HEK293 (cell line): ENCODE measurements at regions of chr20 and their contacts with region 1.

Region 1: DNA sequence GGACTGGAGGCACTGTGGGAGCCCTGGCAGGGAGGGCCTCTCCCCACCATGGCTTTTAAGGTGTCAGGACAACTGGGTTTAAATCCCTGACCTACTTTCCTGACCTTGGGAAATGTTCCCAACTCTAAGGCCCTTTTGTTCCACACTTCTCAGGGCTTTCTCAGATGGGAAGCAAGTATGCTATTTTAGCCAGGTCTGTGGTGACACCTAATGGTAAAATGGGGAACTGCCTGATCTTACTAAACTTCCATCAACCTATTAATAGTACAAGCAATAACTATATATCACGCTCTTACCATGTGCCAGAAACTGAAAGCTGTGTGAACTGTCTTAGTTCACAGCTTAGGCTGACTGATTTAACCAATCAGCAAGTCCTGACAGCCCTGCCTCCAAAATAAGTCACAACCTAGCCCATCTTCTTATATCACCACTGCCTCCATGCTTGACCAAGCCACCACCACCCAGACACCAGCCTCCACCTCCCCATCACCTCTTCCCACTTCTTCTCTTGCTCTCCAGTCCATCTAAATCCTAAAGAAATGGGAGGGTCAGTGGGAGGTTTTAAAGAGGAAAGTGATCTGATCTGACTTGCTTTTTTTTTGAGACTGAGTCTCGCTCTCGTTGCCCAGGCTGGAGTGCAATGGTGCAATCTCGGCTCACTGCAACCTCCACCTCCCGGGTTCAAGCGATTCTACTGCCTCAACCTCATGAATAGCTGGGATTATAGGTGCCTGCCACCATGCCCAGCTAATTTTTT is 6.9 kb upstream of the BLCAP start:
- H3K4me3 ChIP-seq: no peak overlapping the region
- H3K27ac ChIP-seq: no peak overlapping the region
- H3K4me1 ChIP-seq: no peaks in the 10 kb centered on the region
- CTCF ChIP-seq: peak; percentile 65; the same call in 1 of the 2 replicates

Region 2: GRCh38 chr20:36919715-36920333 is 614.8 kb before region 1 on chr20:
- CTCF ChIA-PET with region 1: no interaction called
- POLR2A ChIA-PET with region 1: no interaction called
- H3K4me3 ChIP-seq: no peak overlapping the region
- H3K27ac ChIP-seq: no peak overlapping the region
- H3K4me1 ChIP-seq: no peaks in the 10 kb centered on the region
- CTCF ChIP-seq: peak; percentile 59; the same call in 1 of the 2 replicates

Region 3: DNA sequence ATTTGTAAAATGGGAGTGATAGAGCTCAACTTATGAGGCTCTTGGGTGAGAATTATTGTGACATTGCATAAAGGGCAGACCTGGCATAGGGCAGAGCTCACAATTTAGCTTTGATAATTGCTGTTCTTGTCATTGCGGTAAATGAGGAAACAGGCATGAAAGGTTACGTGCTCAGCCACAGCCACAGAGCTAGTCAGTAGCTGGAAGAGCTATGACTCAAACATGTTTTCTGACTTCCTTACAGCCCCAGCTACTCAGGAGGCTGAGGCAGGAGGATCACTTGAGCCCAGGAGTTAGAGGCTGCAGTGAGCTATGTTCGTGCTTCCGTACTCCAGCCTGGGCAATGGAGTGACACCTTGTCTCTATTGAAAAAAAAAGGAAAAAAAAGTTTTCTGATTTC is 269.4 kb before region 1 on chr20:
- CTCF ChIA-PET with region 1: interaction called, 125 read pairs
- POLR2A ChIA-PET with region 1: no interaction called
- H3K4me3 ChIP-seq: no peak overlapping the region
- H3K27ac ChIP-seq: no peak overlapping the region
- H3K4me1 ChIP-seq: no peaks in the 10 kb centered on the region
- CTCF ChIP-seq: no peak

Region 4: GRCh38 chr20:37471741-37472235 is 62.8 kb before region 1 on chr20:
- CTCF ChIA-PET with region 1: no interaction called
- POLR2A ChIA-PET with region 1: no interaction called
- H3K4me3 ChIP-seq: no peak overlapping the region
- H3K27ac ChIP-seq: no peak overlapping the region
- H3K4me1 ChIP-seq: no peaks in the 10 kb centered on the region
- CTCF ChIP-seq: no peak

Region 5: DNA sequence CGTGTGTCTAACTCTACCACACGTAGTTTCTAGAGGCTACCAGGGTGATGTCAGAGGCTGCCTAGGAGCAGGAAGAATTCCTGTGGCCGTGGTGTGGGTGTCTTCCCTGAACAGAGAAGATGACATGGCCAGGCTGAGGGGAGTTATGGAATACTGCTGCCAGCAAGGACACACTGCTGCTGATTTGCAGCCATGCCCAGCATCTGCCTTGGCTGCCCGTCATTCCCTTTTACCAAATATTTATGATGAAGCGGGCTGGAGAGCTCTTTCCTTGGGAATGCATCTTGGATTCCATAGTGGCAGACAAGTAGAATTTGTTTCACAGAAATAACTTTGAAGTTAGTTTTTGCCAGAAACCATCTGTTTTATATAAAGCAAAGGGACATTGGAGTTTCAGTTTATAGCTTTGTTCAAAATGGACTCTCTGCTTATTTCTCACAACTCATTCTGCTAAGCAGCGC is 287.6 kb after region 1 on chr20:
- CTCF ChIA-PET with region 1: no interaction called
- POLR2A ChIA-PET with region 1: no interaction called
- H3K4me3 ChIP-seq: no peak overlapping the region
- H3K27ac ChIP-seq: no peak overlapping the region
- H3K4me1 ChIP-seq: no peaks in the 10 kb centered on the region
- CTCF ChIP-seq: no peak

Region 6: DNA sequence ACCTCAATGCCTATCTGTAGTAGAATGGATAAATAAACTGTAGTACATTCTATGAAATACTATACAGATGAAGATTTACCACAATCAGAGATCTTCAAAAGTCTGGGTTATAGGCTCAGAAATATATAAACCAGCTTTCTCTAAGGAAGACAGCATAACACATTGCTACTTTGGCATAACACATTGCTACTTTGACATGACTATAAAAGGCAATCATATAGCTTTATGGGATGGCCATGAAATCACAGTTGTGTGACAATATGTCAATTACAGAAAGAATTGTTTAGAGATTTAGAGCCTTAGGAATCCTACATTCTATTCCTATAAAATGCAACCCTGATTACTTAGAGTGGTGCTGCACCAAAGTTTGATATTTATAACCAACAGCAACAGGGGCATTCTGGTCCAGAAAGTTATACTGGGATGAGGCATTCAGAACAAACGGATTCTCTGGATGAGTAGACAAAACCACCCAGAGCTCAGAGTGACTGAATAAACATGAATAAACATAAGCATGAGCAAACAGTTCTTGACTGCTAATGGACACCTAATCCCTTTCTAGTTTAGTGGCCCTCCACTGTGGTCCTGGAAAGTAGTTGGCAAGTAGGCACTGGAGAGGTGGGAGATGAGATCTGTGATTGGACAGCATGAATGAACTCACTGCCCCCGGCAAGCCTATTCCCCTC is 486.7 kb after region 1 on chr20:
- CTCF ChIA-PET with region 1: no interaction called
- POLR2A ChIA-PET with region 1: no interaction called
- H3K4me3 ChIP-seq: no peak overlapping the region
- H3K27ac ChIP-seq: no peak overlapping the region
- H3K4me1 ChIP-seq: peaks cover 12% of the 10 kb centered on the region; the same call in 1 of the 2 replicates
- CTCF ChIP-seq: no peak